IMR-90 (cell line): ENCODE measurements at regions of chr4 and their contacts with region 1.

Region 1: DNA sequence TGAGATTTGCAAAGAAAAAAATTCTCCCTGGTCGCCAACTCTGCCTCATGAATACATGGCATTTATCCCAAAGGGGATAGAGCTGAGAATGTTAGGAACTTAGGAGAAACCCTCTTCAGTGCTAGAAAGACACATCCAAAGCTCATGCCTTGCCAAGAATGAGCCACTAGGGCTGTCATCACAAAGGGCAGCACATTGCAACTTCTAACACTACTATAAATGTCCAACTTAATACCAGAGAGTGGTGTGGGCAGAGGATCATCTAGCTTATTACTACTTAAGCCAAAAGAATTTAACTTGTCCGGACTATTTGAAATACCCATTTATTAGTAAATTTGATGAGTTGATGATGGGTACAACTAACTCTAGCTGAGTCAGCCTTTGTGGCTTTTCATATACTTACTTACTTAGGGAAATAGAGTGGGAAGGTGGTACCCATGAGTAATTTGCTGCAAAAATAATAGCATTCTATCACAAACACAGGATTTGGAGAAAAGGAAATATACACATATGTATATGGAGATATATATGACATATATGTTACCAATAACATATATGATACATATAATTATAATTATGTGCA is 66.3 kb upstream of the GAB1 start:
- DNase-seq: no peak
- ATAC-seq: no peak
- H3K4me3 ChIP-seq: no peak overlapping the region
- H3K27ac ChIP-seq: no peak overlapping the region
- H3K4me1 ChIP-seq: no peaks in the 10 kb centered on the region
- H3K27me3 ChIP-seq: no peaks in the 10 kb centered on the region
- CTCF ChIP-seq: no peak
- POLR2A ChIP-seq: no peak
- RAD21 ChIP-seq: no peak

Region 2: GRCh38 chr4:142211424-142211823 is 1058.9 kb before region 1 on chr4:
- CTCF ChIA-PET with region 1: no interaction called
- POLR2A ChIA-PET with region 1: no interaction called
- dilution Hi-C with region 1: no loop called
- in situ Hi-C with region 1: no loop called
- intact Hi-C with region 1: no loop called
- DNase-seq: no peak
- ATAC-seq: no peak
- H3K4me3 ChIP-seq: no peak overlapping the region
- H3K27ac ChIP-seq: no peak overlapping the region
- H3K4me1 ChIP-seq: no peaks in the 10 kb centered on the region
- H3K27me3 ChIP-seq: no peaks in the 10 kb centered on the region
- CTCF ChIP-seq: no peak
- POLR2A ChIP-seq: no peak
- RAD21 ChIP-seq: no peak

Region 3: DNA sequence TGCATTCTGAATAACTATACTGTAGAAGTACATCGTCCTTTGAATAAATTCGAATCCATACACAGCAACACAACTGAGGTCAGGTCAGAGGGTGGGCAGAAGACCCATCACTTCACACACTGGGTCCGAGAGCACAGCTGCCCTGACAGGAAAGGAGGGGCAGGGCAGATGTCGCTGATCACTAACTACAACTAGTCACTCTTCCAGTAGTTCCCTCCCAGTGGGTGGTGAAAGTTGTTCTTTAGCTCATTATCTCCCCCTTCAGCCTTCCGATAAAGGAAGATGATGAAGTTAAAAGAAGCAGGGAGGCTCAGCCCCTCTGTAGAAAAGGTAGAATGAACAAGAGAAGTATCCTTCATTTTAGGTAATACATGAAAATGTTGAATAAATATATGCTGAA is 703.1 kb before region 1 on chr4:
- CTCF ChIA-PET with region 1: no interaction called
- POLR2A ChIA-PET with region 1: no interaction called
- dilution Hi-C with region 1: no loop called
- in situ Hi-C with region 1: no loop called
- intact Hi-C with region 1: loop called (anchors 5 kb)
- DNase-seq: no peak
- ATAC-seq: no peak
- H3K4me3 ChIP-seq: no peak overlapping the region
- H3K27ac ChIP-seq: no peak overlapping the region
- H3K4me1 ChIP-seq: 0 out of 2 replicates have a peak, but pooled peaks cover 1% of the 10 kb centered on the region
- H3K27me3 ChIP-seq: no peaks in the 10 kb centered on the region
- CTCF ChIP-seq: no peak
- POLR2A ChIP-seq: no peak
- RAD21 ChIP-seq: no peak

Region 4: GRCh38 chr4:143616771-143617170 is 346.4 kb after region 1 on chr4:
- CTCF ChIA-PET with region 1: no interaction called
- POLR2A ChIA-PET with region 1: no interaction called
- dilution Hi-C with region 1: no loop called
- in situ Hi-C with region 1: no loop called
- intact Hi-C with region 1: no loop called
- DNase-seq: no peak
- ATAC-seq: no peak
- H3K4me3 ChIP-seq: no peak overlapping the region
- H3K27ac ChIP-seq: no peak overlapping the region
- H3K4me1 ChIP-seq: no peaks in the 10 kb centered on the region
- H3K27me3 ChIP-seq: no peaks in the 10 kb centered on the region
- CTCF ChIP-seq: no peak
- POLR2A ChIP-seq: no peak
- RAD21 ChIP-seq: no peak